ENCODE measurements at regions of chr13 and their contacts with region 1.

Region 1: GRCh38 chr13:94967183-94968039 is 255.1 kb upstream of the SOX21 start:
- DNase-seq: no peak
- ATAC-seq: peak; percentile 82
- H3K4me3 ChIP-seq: peak overlapping the region; percentile 46 to 72
- H3K27ac ChIP-seq: no peak overlapping the region; the same call in 1 of the 2 replicates
- H3K4me1 ChIP-seq: peaks cover 7% of the 10 kb centered on the region
- H3K27me3 ChIP-seq: no peaks in the 10 kb centered on the region
- CTCF ChIP-seq: no peak

Region 2: DNA sequence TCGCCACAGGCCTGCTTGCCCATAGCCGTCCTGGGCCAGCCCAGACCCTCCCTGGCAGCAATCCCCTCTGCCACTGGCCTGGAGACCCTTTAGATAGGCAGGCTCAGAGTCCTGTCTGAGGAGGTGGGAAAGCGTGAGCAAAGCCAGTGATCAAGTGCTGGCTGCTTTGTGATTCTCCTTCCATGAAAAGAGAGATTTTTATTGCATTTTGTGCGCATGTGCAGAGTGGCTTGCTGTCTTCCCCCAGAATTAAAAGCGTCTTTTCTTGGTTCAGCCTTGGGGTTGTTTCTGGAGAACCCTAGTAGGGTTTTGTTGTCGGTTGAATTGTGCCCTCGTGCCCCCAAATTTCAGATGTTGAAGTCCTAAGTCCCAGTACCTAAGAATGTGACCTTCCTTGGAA is 443.0 kb before region 1 on chr13:
- CTCF ChIA-PET with region 1: no interaction called
- POLR2A ChIA-PET with region 1: no interaction called
- in situ Hi-C with region 1: no loop called
- intact Hi-C with region 1: no loop called
- DNase-seq: no peak
- ATAC-seq: no peak
- H3K4me3 ChIP-seq: no peak overlapping the region
- H3K27ac ChIP-seq: no peak overlapping the region
- H3K4me1 ChIP-seq: no peaks in the 10 kb centered on the region
- H3K27me3 ChIP-seq: no peaks in the 10 kb centered on the region
- CTCF ChIP-seq: no peak

Region 3: DNA sequence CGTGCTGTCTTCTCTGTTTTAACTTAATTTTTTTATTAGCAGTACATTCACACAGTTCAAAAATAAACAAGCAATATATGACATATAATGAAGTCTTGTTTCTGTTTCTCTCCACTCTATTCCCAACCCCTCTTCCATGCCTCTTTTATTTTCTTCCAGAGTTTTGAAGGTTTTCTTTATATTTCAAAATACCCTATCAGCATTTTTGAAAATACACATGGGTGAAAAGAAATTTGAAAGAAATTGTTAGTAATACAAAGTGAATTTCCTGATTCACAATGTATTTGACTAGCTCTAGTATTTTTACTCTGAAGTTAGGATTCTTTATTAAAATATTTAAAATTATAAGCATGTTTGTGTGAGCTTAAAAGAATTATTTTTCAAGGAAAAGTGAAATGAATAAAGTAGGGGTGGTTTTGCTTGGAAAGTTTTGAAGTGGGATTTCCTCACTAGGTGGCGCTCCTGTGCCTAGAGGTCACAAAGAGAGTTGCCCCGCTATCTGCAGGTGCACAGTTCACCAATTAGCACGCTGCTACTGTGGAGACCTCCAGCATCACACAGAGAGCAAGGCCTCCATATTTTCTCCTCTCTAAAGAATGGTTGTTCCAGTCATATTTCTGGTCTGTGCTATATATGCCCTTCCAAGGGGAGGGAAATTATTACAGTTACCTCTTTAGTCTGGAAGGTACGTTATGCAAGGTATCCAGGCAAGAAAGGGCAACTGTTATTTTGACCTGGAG is 292.6 kb before region 1 on chr13:
- CTCF ChIA-PET with region 1: interaction called, 4 read pairs
- POLR2A ChIA-PET with region 1: no interaction called
- in situ Hi-C with region 1: no loop called
- intact Hi-C with region 1: loop called (anchors 2 kb)
- DNase-seq: peak; percentile 38
- ATAC-seq: peak; percentile 51; the same call in 1 of the 2 replicates
- H3K4me3 ChIP-seq: no peak overlapping the region
- H3K27ac ChIP-seq: no peak overlapping the region
- H3K4me1 ChIP-seq: no peaks in the 10 kb centered on the region
- H3K27me3 ChIP-seq: no peaks in the 10 kb centered on the region
- CTCF ChIP-seq: peak; percentile 83

Region 4: DNA sequence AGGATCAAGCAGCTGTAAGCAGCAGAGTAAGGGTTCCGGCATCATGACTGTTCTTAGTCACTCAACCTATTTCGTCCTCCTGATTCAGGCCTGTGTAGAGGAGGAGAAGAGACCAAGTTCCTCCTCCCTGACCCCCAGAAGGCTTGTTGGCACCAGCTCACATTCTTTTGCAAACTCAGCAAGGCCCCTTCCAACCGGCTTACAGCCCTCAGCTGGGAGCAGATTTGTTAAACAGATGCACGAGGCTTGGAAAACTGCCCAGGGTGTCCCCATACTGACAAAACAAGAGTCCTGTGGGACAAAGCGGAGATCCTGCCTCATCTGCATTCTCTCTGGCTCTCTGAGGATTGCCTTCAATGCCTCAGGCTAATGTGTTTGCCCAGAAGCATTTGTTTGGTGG is 141.9 kb before region 1 on chr13:
- CTCF ChIA-PET with region 1: no interaction called
- POLR2A ChIA-PET with region 1: no interaction called
- in situ Hi-C with region 1: no loop called
- intact Hi-C with region 1: no loop called
- DNase-seq: no peak
- ATAC-seq: no peak
- H3K4me3 ChIP-seq: no peak overlapping the region
- H3K27ac ChIP-seq: no peak overlapping the region
- H3K4me1 ChIP-seq: no peaks in the 10 kb centered on the region
- H3K27me3 ChIP-seq: no peaks in the 10 kb centered on the region
- CTCF ChIP-seq: no peak